ENCODE measurements at regions of chr10 and their contacts with region 1.

Region 1: DNA sequence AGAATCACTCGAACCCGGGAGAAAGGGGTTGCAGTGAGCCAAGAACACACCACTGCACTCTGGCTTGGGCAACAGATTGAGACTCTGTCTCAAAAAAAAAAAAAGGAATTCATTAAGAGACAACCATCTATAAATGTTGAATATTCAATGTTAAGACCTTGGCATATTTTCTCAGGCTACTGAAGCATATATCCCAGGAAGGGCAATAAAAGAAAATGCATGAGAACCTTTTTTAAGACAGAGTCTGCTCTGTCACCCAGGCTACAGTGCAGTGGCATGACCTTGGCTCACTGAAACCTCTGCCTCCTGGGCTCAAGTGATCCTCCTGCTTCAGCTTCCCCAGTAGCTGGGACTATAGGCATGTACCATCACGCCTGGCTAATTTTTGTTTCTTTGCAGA is 165.0 kb downstream of the JMJD1C start:
- DNase-seq: no peak
- H3K4me3 ChIP-seq: no peak overlapping the region
- H3K27ac ChIP-seq: no peak overlapping the region
- H3K4me1 ChIP-seq: no peaks in the 10 kb centered on the region
- H3K27me3 ChIP-seq: no peaks in the 10 kb centered on the region
- CTCF ChIP-seq: no peak

Region 2: DNA sequence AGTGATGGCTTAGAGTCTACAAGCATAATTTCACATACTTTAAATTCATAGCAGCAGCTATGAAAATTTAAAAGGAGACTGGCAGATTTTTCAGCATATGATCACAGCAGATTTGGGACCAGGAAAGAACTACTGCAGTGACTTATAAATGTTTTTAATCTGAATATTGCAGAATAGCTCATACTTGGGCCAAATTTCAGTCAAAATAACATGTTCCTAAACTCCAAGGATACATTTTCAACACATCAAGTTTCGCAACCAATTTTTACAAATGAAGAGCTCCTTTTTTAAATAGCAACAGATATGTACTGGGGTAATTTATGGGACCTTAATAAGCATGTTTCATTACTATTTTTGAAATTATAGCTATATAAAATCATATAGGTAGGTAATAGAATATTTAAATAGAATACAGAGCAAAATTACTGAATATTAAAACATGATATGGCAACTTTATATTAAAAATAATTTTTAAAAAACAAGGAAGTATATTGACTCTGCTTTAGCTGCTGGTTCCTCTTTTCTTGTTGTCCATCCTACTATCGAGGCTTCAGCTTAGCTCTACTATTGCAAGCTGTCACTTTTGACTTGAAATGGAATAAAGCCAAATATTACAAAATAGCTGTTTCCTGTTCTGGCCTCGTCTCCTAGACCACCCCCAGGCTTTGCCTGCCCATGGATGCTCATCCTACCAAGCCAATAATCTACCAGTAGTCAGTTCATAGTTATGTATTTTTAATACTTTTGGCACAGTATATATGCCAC is 44.6 kb before region 1 on chr10:
- CTCF ChIA-PET with region 1: no interaction called
- POLR2A ChIA-PET with region 1: no interaction called
- intact Hi-C with region 1: no loop called
- DNase-seq: no peak
- H3K4me3 ChIP-seq: no peak overlapping the region
- H3K27ac ChIP-seq: no peak overlapping the region
- H3K4me1 ChIP-seq: peaks cover 21% of the 10 kb centered on the region
- H3K27me3 ChIP-seq: no peaks in the 10 kb centered on the region
- CTCF ChIP-seq: no peak

Region 3: GRCh38 chr10:63456437-63457210 is 155.8 kb after region 1 on chr10:
- CTCF ChIA-PET with region 1: no interaction called
- POLR2A ChIA-PET with region 1: interaction called, 26 read pairs
- intact Hi-C with region 1: no loop called
- DNase-seq: no peak
- H3K4me3 ChIP-seq: no peak overlapping the region
- H3K27ac ChIP-seq: peak overlapping the region; percentile 30; the same call in 1 of the 2 replicates
- H3K4me1 ChIP-seq: no peaks in the 10 kb centered on the region
- H3K27me3 ChIP-seq: no peaks in the 10 kb centered on the region
- CTCF ChIP-seq: no peak

Measured in PC-9 (cell line).